MCF 10A (cell line): ENCODE measurements at regions of chr17 and their contacts with region 1.

Region 1: DNA sequence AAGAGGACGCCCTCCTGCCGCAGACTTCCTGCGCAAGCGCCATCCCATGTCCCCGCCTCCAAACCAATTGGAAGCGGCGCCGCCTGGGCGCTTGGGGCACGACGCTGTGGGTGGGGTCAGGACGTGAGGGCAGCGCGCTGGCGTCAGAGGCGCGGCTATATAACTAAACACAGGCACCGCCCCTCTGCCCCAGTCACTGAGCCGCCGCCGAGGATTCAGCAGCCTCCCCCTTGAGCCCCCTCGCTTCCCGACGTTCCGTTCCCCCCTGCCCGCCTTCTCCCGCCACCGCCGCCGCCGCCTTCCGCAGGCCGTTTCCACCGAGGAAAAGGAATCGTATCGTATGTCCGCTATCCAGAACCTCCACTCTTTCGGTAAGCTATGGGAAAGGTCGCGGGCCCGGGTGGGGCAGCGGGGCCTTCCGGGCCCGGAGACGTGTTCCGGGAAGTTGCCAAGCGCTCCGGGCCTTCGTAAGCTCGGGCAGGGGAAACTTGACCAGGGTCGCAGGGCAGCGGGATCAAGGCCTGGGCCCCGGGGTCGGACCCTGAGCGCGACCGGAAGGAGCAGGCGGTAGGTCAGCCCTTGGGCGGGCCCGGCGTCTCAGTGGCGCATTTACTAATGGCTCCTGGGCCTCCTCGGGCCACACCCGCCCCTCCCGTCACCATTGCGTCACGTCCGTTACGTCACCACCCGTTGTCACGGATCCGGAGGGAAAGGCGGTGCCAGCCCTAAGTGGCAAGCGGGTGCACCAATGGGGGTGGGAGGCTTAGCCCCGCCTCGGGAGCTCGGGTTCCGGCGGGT is at the start of gene EIF1:
- DNase-seq: peak; percentile 100
- H3K4me3 Mint-ChIP-seq: peak within 1 kb of the TSS; percentile 94
- H3K27ac Mint-ChIP-seq: peak within 1 kb of the TSS; percentile 100
- H3K4me1 Mint-ChIP-seq: peaks cover 6% of the 10 kb centered on the region
- H3K27me3 Mint-ChIP-seq: no peaks in the 10 kb centered on the region
- CTCF ChIP-seq: no peak
- total RNA-seq, gene EIF1: 1,945 and 2,169 TPM in 2 replicates

Region 2: GRCh38 chr17:40909351-40909750 is 779.5 kb before region 1 on chr17:
- CTCF ChIA-PET with region 1: interaction called, 3 read pairs
- POLR2A ChIA-PET with region 1: interaction called, 10 read pairs
- intact Hi-C with region 1: no loop called
- DNase-seq: peak; percentile 96
- H3K4me3 Mint-ChIP-seq: peak overlapping the region; percentile 61
- H3K27ac Mint-ChIP-seq: peak overlapping the region; percentile 91
- H3K4me1 Mint-ChIP-seq: peaks cover 16% of the 10 kb centered on the region
- H3K27me3 Mint-ChIP-seq: no peaks in the 10 kb centered on the region
- CTCF ChIP-seq: peak; percentile 71

Region 3: DNA sequence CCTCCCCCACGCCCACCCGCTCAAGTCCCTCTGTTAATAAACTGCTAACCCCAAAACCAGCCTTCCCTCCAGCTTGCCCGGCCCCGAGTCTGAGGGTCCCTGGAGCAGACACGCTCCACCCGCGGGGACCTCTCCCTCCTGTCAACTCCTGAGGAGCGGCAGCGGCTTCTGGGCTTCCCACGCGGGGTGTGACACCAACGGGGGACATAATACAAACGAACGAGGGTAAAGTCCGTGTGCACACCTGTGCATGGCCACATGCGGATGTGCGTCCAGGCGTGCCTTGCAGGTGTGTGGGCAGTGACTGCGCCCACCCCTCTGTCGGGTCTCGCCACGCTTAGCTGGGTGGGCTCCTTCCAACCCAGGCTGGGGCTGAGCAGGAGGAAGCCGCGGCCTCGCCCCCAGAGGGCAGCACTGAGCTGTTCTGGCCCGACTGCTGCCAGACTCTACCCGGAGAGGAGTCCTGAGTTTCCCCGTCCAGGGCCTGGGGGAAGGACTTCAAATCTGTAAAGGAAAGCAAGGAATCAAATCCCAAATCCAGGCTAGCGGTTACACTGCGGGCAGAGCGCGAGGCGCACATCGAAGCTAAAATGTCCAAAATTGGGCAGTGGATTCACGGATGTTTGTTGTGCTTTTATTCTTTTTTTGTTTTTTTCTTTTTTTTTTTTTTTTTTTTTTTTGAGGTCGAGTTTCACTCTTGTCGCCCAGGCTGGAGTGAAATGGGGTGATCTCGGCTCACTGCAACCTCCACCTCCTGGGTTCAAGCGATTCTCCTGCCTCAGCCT is 40.3 kb before region 1 on chr17:
- CTCF ChIA-PET with region 1: interaction called, 3 read pairs
- POLR2A ChIA-PET with region 1: interaction called, 136 read pairs
- intact Hi-C with region 1: no loop called
- DNase-seq: peak; percentile 87
- H3K4me3 Mint-ChIP-seq: peak overlapping the region; percentile 22
- H3K27ac Mint-ChIP-seq: peak overlapping the region; percentile 93
- H3K4me1 Mint-ChIP-seq: peaks cover 34% of the 10 kb centered on the region
- H3K27me3 Mint-ChIP-seq: no peaks in the 10 kb centered on the region
- CTCF ChIP-seq: peak; percentile 88

Region 4: DNA sequence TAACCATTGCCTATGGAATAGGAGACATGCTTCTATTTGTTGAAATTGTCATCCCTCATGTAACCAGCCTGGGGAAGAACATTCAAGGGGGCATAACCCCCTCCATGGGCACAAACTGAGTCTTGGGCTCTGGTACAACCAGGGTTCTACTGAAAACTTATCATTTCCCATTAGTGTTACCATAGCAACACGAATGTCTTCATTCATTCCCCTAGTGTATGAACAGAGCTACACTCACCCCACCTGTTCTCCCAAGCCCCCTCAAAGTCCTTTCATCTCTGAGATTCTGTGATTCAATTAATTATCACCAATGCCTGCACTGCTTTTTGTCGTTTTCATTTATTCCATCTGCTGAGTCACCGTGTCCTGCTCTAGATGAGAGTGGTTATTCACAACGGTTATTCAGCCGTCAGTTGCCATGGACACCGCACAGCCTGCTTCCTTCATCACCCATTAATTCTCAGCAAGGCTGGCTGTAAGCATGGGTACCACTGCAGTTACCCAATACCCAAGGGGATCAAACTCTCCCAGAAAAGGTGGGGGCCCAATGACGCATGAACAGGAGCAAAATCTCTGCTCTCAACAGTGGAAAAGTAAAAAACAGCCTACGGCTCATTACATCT is 21.7 kb after region 1 on chr17:
- CTCF ChIA-PET with region 1: interaction called, 4 read pairs
- POLR2A ChIA-PET with region 1: interaction called, 30 read pairs
- intact Hi-C with region 1: no loop called
- DNase-seq: peak; percentile 29
- H3K4me3 Mint-ChIP-seq: no peak overlapping the region
- H3K27ac Mint-ChIP-seq: no peak overlapping the region
- H3K4me1 Mint-ChIP-seq: no peaks in the 10 kb centered on the region
- H3K27me3 Mint-ChIP-seq: no peaks in the 10 kb centered on the region
- CTCF ChIP-seq: no peak

Region 5: GRCh38 chr17:41792845-41793783 is 104.2 kb after region 1 on chr17:
- CTCF ChIA-PET with region 1: no interaction called
- POLR2A ChIA-PET with region 1: interaction called, 22 read pairs
- intact Hi-C with region 1: no loop called
- DNase-seq: peak; percentile 82
- H3K4me3 Mint-ChIP-seq: peak overlapping the region; percentile 71
- H3K27ac Mint-ChIP-seq: peak overlapping the region; percentile 96
- H3K4me1 Mint-ChIP-seq: peaks cover 30% of the 10 kb centered on the region
- H3K27me3 Mint-ChIP-seq: no peaks in the 10 kb centered on the region
- CTCF ChIP-seq: no peak

Region 6: GRCh38 chr17:41918314-41919164 is 229.6 kb after region 1 on chr17 and contains the start of gene ACLY:
- CTCF ChIA-PET with region 1: no interaction called
- POLR2A ChIA-PET with region 1: interaction called, 20 read pairs
- intact Hi-C with region 1: no loop called
- DNase-seq: peak; percentile 98
- H3K4me3 Mint-ChIP-seq: peak within 1 kb of the TSS; percentile 87
- H3K27ac Mint-ChIP-seq: peak within 1 kb of the TSS; percentile 78
- H3K4me1 Mint-ChIP-seq: peaks cover 30% of the 10 kb centered on the region
- H3K27me3 Mint-ChIP-seq: no peaks in the 10 kb centered on the region
- CTCF ChIP-seq: no peak
- total RNA-seq, gene ACLY: 67.7 and 67.9 TPM in 2 replicates